PC-3 (cell line): ENCODE measurements at regions of chr6 and their contacts with region 1.

Region 1: GRCh38 chr6:125314019-125314581 is 12.3 kb upstream of the HDDC2 start:
- DNase-seq: peak; percentile 62
- ATAC-seq: peak; percentile 88
- H3K4me3 ChIP-seq: no peak overlapping the region
- H3K27ac ChIP-seq: no peak overlapping the region
- H3K4me1 ChIP-seq: no peaks in the 10 kb centered on the region
- H3K27me3 ChIP-seq: peaks cover 18% of the 10 kb centered on the region
- CTCF ChIP-seq: peak; percentile 81

Region 2: GRCh38 chr6:125773387-125774341 is 459.6 kb after region 1 on chr6:
- CTCF ChIA-PET with region 1: no interaction called
- POLR2A ChIA-PET with region 1: no interaction called
- intact Hi-C with region 1: loop called (anchors 1 kb)
- DNase-seq: no peak
- ATAC-seq: no peak
- H3K4me3 ChIP-seq: no peak overlapping the region
- H3K27ac ChIP-seq: no peak overlapping the region
- H3K4me1 ChIP-seq: no peaks in the 10 kb centered on the region
- H3K27me3 ChIP-seq: peaks cover 8% of the 10 kb centered on the region; the same call in 1 of the 2 replicates
- CTCF ChIP-seq: no peak